Thyroid gland (tissue), 4 donors: ENCODE measurements at regions of chr13 and their contacts with region 1.

Region 1: DNA sequence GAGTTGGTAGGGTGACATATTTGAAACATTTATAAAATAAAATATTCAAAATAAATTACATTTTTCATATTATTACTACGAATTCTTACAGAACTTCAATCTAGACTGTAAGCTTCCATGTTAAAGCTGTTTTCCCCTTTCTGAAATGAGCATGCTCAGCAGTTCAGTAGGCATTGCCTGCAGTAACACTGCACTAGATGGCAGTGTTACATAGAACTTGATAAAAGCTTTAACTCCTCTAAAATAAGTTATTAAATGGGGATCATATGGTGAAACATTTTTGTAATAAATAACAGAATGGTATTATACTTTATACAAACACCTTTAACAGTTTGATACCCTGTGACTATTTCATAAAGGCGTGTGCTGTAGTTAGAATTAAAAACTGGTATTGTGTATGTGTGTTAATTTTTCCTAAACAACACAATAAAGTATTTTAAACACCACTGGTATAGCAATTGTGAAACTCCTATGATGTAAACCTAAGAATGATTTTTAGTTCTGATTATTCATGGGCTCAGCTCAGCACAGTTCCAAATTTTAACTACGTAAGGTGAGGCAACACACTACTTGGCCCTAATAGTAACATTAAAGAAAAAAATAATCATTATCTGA is 11.6 kb upstream of the GPR18 start:
- DNase-seq: no peak
- H3K4me3 ChIP-seq: no peak overlapping the region
- H3K27ac ChIP-seq: no peak overlapping the region
- H3K4me1 ChIP-seq: peaks cover 0 to 6% of the 10 kb centered on the region in 2 donors
- H3K27me3 ChIP-seq: no peaks in the 10 kb centered on the region
- CTCF ChIP-seq: peak in 4 of 6 experiments; percentile 56 to 81 (median 73)
- POLR2A ChIP-seq: no peak

Region 2: DNA sequence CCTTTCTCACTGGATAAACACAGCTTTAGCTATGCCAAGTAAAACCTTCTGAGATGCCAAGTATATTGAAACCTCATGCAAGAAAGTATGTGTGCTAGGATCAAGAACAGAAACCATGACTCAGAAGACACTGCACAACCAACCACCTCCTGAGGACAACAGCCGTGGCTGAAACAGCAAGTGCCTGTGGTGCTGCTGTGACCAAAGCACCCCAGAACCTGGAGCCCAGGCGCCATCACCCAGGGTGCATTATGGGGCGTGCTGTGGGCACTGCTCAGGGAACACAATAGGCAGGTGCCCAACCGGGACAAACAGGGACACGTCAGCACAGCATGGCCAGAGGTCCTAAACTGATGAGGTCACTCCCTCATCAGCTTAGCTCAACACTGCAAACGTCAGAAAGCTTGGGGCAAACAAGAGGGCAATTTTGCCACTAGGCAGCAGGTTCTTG is 415.9 kb before region 1 on chr13:
- intact Hi-C with region 1: no loop called
- DNase-seq: no peak
- H3K4me3 ChIP-seq: no peak overlapping the region
- H3K27ac ChIP-seq: no peak overlapping the region
- H3K4me1 ChIP-seq: no peaks in the 10 kb centered on the region
- H3K27me3 ChIP-seq: no peaks in the 10 kb centered on the region
- CTCF ChIP-seq: no peak
- POLR2A ChIP-seq: no peak

Region 3: DNA sequence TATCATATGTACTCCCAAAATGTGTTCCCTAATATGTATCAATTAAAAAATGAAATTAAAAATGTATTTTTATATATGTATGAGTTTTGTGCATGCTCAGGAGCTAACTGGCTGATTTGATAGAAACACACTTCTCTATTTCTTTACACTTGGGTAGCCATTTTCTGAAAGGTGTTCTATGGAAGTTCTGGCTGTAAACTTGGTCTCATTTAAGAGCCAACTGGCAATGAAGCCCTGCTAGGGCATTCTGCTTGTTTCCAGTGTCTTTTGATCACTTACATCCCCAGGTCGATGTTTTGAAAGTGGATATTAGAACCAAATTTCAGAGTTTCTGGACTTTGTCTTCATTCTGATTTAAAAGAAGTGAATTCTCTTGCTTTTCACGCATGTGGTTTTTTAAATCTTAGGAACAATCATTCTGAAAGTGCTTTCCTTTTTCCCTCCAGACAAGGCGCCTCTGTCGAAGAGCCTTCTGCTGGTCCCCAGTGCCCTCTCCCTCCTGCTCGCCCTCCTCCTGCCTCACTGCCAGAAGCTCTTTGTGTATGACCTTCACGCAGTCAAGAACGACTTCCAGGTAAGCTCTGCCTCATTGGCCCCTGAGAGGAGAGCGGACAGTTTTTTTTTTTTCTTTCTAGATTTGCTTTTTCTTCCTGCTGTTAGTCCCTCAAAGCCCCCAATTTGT is 31.6 kb before region 1 on chr13:
- intact Hi-C with region 1: no loop called
- DNase-seq: peak; percentile 32 to 58
- H3K4me3 ChIP-seq: no peak overlapping the region
- H3K27ac ChIP-seq: peak overlapping the region in 2 of 3 donors; percentile 52 to 55
- H3K4me1 ChIP-seq: peaks cover 0 to 6% of the 10 kb centered on the region in 2 donors
- H3K27me3 ChIP-seq: no peaks in the 10 kb centered on the region
- CTCF ChIP-seq: no peak
- POLR2A ChIP-seq: no peak

Region 4: DNA sequence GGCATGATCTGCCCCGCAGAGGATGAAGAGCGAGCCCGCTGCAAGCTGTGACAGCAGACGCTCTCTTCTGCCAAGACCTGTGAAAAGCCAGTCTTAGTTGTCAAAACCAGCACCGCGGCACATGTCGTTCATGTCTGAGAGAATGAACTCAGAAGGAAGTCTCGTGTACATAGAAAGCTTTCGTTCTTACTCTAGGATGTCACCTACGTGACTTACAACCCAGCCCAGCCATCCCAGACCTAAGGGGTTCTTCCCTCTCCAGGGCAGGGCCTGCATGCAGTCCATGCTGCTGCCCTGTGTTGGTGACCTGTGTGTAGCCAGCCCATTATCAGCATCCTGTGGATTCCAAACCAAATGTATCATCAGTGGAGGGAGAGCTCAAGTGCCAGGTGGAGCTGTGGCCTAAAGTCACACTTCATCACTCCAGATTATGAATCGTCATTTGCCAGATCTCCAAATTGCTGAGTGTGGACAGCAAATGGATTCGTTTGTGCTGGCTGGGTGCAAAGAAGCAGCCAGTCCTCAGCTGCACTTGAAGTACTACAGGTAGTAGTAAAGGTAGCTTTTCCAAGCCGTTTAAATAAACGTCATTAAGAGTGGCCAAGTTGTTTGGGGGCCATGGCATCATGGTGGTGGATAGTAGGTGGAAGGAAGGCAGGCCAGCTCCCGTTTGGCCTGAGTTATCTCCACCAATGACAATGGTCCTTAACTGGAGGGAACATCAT is 111.3 kb after region 1 on chr13:
- intact Hi-C with region 1: loop called (anchors 5 kb)
- DNase-seq: no peak
- H3K4me3 ChIP-seq: no peak overlapping the region
- H3K27ac ChIP-seq: no peak overlapping the region
- H3K4me1 ChIP-seq: peaks cover 0 to 13% of the 10 kb centered on the region in 2 donors
- H3K27me3 ChIP-seq: no peaks in the 10 kb centered on the region
- CTCF ChIP-seq: no peak
- POLR2A ChIP-seq: no peak